Activated B cell treated with CpG ODN at 0.5 μM for 24 hours (primary cell): ENCODE measurements at regions of chr1 and their contacts with region 1.

Region 1: GRCh38 chr1:40774266-40774998 is 9.2 kb upstream of the KCNQ4 start:
- DNase-seq: peak; percentile 53
- ATAC-seq: peak; percentile 66
- H3K4me3 Mint-ChIP-seq: no peak overlapping the region
- H3K27ac Mint-ChIP-seq: no peak overlapping the region
- H3K4me1 Mint-ChIP-seq: no peaks in the 10 kb centered on the region
- H3K27me3 Mint-ChIP-seq: no peaks in the 10 kb centered on the region
- CTCF ChIP-seq: peak; percentile 57

Region 2: DNA sequence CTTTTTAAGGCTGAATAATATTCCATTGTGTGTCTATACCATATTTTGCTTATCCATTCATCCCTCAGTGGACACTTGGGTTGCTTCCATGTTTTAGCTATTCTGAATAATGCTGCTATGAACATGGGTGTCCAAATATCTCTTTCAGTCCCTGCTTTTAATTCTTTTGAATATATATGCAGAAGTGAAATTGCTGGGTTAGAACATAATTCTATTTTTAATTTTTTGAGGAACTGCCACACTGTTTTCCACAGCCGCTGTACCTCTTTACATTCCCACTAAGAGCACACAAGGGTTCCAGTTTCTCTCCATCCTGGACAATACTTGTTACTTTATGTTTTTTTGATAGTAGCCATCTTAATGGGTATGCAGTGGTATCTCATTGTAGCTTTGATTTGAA is 174.5 kb before region 1 on chr1:
- CTCF ChIA-PET with region 1: no interaction called
- POLR2A ChIA-PET with region 1: no interaction called
- intact Hi-C with region 1: no loop called
- DNase-seq: no peak
- ATAC-seq: no peak
- H3K4me3 Mint-ChIP-seq: no peak overlapping the region
- H3K27ac Mint-ChIP-seq: no peak overlapping the region
- H3K4me1 Mint-ChIP-seq: no peaks in the 10 kb centered on the region
- H3K27me3 Mint-ChIP-seq: peaks cover 2% of the 10 kb centered on the region
- CTCF ChIP-seq: no peak

Region 3: GRCh38 chr1:40612345-40612831 is 162.0 kb before region 1 on chr1:
- CTCF ChIA-PET with region 1: no interaction called
- POLR2A ChIA-PET with region 1: no interaction called
- intact Hi-C with region 1: loop called (anchors 1 kb)
- DNase-seq: peak; percentile 27
- ATAC-seq: peak; percentile 96
- H3K4me3 Mint-ChIP-seq: no peak overlapping the region
- H3K27ac Mint-ChIP-seq: no peak overlapping the region
- H3K4me1 Mint-ChIP-seq: no peaks in the 10 kb centered on the region
- H3K27me3 Mint-ChIP-seq: peaks cover 2% of the 10 kb centered on the region
- CTCF ChIP-seq: peak; percentile 52

Region 4: GRCh38 chr1:40763742-40764532 is 10.5 kb before region 1 on chr1:
- CTCF ChIA-PET with region 1: interaction called, 18 read pairs
- POLR2A ChIA-PET with region 1: no interaction called
- intact Hi-C with region 1: no loop called
- DNase-seq: no peak
- ATAC-seq: no peak
- H3K4me3 Mint-ChIP-seq: no peak overlapping the region
- H3K27ac Mint-ChIP-seq: peak overlapping the region; percentile 53
- H3K4me1 Mint-ChIP-seq: peaks cover 30% of the 10 kb centered on the region
- H3K27me3 Mint-ChIP-seq: no peaks in the 10 kb centered on the region
- CTCF ChIP-seq: no peak

Region 5: DNA sequence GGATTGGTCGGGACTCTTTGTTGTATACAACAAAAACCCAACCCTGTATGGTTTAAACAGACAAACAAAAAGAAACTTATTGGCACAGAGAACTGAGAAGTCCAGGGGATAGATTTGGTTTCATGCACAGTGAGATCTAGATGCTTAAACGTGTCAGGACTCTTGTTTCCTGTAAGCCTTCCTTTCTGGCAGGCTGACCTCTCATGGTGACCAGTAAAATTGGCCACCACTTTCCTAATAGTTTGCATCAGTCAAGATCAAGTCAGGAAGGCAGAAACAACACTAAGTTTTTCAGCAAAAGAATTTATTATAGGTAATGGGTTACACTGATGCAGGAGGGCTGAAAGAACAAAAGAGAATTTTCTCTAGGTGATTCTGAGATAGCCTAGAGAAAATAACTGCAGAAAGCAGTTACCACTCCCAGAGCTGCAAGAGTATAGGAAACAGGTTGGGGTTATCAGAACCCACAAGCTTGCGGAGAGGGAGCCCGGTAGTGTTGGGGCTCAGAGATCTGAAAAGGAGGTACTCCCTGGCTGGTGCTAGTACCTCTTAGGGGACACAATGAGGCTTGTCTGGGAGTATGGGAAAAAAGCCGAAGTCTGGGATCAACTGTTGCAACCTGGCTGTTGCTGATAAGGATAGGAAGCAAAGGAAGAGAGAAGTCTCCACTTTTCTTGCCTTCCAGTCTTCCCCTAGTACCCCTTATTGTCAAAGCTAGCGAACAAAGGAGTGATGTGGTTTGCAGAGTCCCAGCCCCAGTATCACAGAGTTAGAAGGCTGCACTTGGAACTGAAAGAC is 66.3 kb after region 1 on chr1:
- CTCF ChIA-PET with region 1: interaction called, 18 read pairs
- POLR2A ChIA-PET with region 1: no interaction called
- intact Hi-C with region 1: no loop called
- DNase-seq: no peak
- ATAC-seq: no peak
- H3K4me3 Mint-ChIP-seq: no peak overlapping the region
- H3K27ac Mint-ChIP-seq: no peak overlapping the region
- H3K4me1 Mint-ChIP-seq: peaks cover 8% of the 10 kb centered on the region
- H3K27me3 Mint-ChIP-seq: peaks cover 13% of the 10 kb centered on the region
- CTCF ChIP-seq: no peak

Region 6: DNA sequence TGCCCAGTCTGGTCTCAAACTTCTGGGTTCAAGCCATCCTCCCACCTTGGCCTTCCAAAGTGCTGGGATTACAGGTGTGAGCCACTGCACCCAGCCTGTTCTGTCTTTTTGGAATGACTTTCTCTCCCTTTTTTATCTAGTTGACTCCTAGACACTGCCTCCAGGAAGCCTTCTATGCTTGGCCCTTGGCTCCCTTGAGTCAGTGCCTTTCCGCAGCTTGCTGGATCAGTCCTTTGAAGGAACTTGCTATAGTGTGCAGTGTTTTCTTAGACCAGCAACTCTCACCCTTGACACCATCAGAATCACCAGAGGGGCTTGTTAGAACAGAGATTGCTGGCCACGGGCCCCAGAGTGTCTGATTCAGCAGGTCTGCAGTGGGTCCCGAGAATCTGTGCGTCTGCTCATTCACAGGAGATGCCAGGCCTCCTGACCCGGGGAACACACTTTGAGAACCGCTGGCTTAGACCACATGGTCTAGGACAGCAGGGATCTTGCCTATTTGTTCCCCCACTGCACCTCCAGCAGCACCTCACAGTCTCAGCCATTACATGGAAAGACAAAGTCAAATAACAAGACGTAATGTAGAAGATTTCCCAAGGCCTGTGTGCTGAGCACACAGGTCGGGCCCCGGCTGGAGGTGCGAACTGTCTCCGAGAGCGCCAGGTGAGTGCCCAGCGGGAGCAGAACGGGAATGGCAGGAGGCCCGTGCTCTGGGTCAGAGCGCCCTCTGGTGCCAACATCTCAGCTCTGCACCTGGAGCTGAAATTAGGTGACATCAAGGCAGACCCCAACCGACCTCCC is 177.7 kb after region 1 on chr1:
- CTCF ChIA-PET with region 1: interaction called, 19 read pairs
- POLR2A ChIA-PET with region 1: no interaction called
- intact Hi-C with region 1: loop called (anchors 1 kb)
- DNase-seq: peak; percentile 47
- ATAC-seq: peak; percentile 64
- H3K4me3 Mint-ChIP-seq: no peak overlapping the region
- H3K27ac Mint-ChIP-seq: peak overlapping the region; percentile 42
- H3K4me1 Mint-ChIP-seq: peaks cover 5% of the 10 kb centered on the region
- H3K27me3 Mint-ChIP-seq: peaks cover 36% of the 10 kb centered on the region
- CTCF ChIP-seq: peak; percentile 23

Region 7: GRCh38 chr1:40979233-40980067 is 205.0 kb after region 1 on chr1 and contains the start of gene CTPS1:
- CTCF ChIA-PET with region 1: no interaction called
- POLR2A ChIA-PET with region 1: no interaction called
- intact Hi-C with region 1: no loop called
- DNase-seq: peak; percentile 95
- ATAC-seq: peak; percentile 86
- H3K4me3 Mint-ChIP-seq: peak within 1 kb of the TSS; percentile 94
- H3K27ac Mint-ChIP-seq: peak within 1 kb of the TSS; percentile 92
- H3K4me1 Mint-ChIP-seq: peaks cover 19% of the 10 kb centered on the region
- H3K27me3 Mint-ChIP-seq: no peaks in the 10 kb centered on the region
- CTCF ChIP-seq: no peak
- total RNA-seq, gene CTPS1: 39.5 and 43.0 TPM in 2 replicates